HAP-1 (cell line): ENCODE measurements at regions of chr19 and their contacts with region 1.

Region 1: DNA sequence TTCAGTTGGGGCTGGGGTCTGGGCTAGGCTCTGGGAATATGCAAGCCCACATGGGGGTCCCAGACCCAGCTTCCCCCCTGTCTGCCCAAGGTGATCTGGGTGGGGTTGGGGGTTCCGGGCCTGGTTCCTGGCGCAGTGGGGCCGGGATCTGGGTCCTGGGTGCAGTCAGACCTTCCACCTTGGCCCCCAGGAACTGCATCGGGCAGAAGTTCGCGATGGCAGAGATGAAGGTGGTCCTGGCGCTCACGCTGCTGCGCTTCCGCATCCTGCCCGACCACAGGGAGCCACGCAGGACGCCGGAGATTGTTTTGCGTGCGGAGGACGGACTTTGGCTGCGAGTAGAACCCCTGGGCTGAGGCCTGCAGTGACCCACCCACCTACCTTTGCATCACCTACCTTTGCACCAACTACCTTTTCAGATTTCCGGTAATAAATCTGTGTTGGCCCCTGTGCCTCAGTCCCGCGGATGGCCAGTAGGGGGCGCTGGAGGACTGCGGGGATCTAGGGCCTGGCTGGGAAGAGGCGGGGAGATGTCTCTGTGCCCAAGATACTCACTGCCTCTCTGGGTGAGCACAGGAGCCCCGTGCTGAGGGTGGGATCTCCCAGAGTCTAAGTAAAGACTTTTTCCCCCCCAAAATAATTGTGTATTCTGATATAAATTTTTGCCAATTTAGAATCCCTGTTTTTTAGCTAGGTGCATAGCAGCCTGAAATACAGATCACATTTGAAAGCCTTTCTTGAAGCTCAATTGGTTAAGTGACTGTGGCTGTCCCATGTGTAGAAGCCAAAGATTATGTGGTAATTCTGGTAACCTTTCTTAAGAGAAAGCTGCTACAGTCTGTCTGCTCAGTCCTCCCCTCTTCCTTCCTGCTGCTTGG is 11.5 kb upstream of the CYP4F3 start:
- DNase-seq: peak; percentile 32 to 88
- H3K4me3 ChIP-seq: no peak overlapping the region
- H3K4me1 ChIP-seq: no peaks in the 10 kb centered on the region
- H3K27me3 ChIP-seq: no peaks in the 10 kb centered on the region

Region 2: DNA sequence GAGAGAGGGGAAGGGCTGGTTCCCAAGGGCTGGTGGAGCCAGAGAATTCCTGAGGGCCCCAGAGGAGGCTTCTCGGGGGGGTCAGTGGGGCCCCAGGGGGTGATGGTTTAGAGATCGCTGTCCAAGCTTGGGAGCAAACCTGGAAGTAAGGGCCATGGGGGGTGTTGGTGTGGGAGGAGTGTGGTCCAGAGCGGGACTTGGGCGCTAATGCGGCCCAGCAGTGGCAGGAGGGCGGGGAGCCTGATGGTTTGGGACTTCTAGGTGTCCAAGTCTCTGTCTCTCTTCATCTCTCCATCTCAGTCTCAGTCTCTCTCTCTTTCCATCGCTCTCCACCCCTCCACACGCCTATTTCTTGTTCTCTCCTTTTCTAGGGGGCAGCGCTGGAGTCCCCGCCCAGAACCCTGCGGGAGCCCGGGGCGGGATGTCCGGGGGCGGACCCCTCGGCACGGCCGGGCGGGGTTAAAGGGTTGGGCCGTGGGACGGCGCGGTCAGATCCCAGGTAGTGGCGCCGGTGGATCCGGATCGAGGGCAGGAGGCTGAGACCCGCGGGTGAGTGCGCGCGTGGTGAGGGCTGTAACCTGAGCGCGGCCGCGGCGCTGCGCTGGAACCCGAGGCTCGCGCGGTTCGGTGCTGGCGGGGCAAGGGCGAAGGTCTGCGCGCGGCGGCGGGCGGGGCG is 121.1 kb before region 1 on chr19 and contains the start of gene CYP4F22:
- in situ Hi-C with region 1: no loop called
- DNase-seq: peak in 1 of 2 experiments; percentile 29
- H3K4me3 ChIP-seq: peak within 1 kb of the TSS; percentile 15
- H3K4me1 ChIP-seq: no peaks in the 10 kb centered on the region
- H3K27me3 ChIP-seq: peaks cover 22% of the 10 kb centered on the region

Region 3: DNA sequence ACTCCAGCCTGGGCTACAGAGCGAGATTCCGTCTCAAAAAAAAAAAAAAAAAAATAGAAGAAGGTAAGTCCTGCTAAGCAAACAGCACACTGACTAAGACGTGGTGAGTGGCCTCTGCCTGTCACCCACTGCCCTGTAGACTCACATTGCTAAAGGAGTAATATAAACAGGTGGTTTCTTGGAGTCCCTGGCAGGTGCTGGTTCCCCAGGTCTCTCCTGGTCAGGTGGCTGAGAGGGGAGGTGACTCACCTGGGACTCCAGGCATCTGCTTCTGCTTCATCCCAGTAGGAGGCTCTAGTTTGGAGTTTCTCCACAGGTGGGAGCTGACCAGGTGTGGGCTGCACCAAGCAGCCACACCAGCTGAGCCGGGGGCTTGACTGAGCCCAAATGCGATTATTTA is 186.1 kb after region 1 on chr19 and contains the start of gene OR10H1:
- in situ Hi-C with region 1: no loop called
- DNase-seq: no peak
- H3K4me3 ChIP-seq: no peak within 1 kb of the TSS
- H3K4me1 ChIP-seq: no peaks in the 10 kb centered on the region
- H3K27me3 ChIP-seq: no peaks in the 10 kb centered on the region

Region 4: DNA sequence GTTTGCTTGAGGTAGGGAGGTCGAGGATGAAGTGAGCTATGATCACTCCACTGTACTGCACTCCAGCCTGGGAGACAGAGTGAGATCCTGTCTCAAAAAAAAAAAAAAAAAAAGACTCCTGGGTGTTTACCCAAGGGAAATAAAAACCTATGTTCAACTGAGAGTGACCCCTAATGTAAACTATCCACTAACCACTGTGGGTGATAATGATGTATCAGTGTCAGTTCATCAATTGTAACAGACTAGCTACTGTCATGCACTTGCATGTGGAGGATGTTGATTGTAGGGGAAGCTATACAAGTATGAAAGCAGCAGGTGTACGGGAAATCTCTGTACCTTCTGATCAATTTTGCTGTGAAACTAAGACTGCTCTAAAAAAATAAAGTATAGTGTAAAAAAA is 546.7 kb after region 1 on chr19:
- in situ Hi-C with region 1: loop called (anchors 10 kb)
- DNase-seq: no peak
- H3K4me3 ChIP-seq: no peak overlapping the region
- H3K4me1 ChIP-seq: no peaks in the 10 kb centered on the region
- H3K27me3 ChIP-seq: no peaks in the 10 kb centered on the region